ENCODE measurements at regions of chrX and their contacts with region 1.

Region 1: DNA sequence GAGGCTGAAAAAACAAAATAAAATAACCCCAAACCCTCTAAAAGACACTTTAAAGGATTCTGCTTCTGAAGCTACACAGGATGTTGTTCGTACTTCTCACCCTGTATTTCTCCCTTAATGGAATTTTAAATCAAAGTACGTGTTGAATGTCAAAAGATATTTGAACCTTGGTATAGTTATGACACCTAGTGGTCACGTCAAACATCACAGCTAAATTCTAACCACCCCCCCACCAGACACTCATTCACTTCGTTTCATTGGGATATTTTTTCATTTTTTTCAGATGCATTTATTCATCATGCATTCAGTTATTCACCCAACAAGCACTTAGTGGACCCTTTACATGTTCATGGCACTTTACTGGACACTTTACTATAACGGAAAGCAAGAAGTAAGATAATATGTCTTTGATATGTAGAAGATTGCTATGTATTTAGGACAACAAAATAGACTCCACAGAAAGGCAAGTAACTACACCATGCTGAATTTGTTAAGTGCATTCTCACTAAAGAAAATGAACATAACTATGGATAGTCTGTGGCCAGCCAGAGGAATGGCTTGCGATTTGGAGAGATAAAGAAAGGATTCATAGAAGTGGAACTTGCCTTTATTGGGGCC is 62.5 kb upstream of the GPR174 start:
- DNase-seq: peak; percentile 36
- H3K4me3 ChIP-seq: no peak overlapping the region
- H3K27ac ChIP-seq: no peak overlapping the region
- H3K4me1 ChIP-seq: no peaks in the 10 kb centered on the region
- H3K27me3 ChIP-seq: no peaks in the 10 kb centered on the region
- CTCF ChIP-seq: peak in 1 of 2 donors; percentile 31
- POLR2A ChIP-seq: no peak

Region 2: DNA sequence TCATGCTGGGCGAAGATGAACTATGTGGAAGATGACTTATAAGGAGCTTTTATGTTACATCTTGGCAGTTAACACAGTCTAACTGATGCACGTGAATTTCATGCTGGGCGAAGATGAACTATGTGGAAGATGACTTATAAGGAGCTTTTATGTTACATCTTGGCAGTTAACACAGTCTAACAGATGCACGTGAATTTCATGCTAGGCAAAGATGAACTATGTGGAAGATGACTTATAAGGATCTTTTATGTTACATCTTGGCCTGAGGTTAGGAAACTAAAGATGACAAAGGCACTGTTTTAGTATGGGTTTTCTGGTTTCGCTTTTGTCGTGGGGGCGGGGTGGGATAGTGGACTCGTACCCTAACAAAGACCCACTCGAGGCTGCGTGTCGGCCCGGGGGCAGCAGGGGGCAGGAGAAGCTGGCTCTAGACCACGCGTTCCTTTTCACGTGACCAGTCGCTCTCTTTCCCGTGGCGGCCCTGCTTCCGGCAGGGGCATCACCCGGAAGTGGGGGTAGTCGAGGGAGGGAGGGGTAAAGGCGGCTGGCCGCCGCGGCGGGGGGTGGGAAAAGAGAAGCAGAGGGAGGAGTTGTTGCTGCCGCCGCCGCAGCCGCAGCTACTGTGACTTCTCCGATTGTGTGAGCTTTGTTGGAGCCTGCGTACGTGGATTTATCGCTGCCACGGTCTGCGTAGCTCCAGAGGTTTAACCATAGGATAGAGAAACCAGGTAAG is 1171.7 kb before region 1 on chrX and contains the start of gene ATP7A:
- CTCF ChIA-PET with region 1: no interaction called
- POLR2A ChIA-PET with region 1: interaction called, 3 read pairs
- dilution Hi-C with region 1: no loop called
- intact Hi-C with region 1: loop called (anchors 5 kb)
- DNase-seq: peak; percentile 87
- H3K4me3 ChIP-seq: peak within 1 kb of the TSS; percentile 49 to 98 (median 80)
- H3K27ac ChIP-seq: peak within 1 kb of the TSS; percentile 78
- H3K4me1 ChIP-seq: peaks cover 6% of the 10 kb centered on the region
- H3K27me3 ChIP-seq: no peaks in the 10 kb centered on the region
- CTCF ChIP-seq: peak; percentile 49 to 69
- POLR2A ChIP-seq: no peak
- total RNA-seq, gene ATP7A: 8.7 and 8.8 TPM in 2 replicates

Region 3: DNA sequence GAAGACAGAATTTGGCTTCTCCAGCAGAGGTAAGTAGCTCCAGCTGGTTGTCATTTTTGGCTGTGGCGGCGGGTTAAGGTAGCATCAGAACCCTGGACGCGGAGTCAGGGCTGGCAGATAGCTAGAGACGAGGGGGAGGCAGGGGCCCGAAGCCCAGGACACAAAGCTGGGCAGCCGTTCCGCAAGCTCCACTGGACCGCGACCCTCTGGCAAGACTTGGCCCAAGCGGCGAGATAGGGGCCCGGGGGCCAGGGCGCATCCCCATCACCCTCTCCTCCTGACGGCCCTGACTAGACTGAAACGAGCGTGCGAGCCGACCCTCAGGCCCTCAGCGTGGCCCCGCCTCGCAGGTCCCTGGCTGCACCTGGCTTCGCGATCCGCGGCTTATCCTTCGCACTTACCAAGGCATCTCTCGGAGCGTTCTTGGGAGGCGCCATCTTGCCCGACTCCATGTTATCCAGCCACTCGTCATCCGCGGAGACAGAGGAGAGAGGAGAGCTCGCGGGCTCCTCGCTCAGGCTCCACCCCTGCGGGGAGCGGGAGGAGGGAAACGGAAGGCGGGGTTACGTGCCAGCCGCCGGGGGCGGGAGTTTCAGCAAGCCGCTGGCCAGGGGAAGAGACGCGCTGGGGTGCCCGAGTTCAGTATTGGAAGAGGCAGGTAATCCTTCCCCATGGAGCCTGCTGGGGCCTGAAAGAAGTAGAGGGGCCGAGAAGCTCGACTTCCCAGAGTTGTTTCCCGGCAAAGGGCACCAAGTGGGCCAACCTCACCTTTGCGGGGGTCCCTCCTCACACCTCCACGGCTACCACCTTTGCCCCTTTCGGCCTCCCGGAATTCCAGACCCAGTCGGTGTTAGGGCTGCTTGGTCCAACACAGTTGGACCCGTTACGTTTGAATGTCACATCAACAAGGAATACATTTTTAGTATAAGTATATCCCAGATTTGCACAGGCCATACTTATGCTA is 942.6 kb before region 1 on chrX and contains the start of gene TAF9B:
- CTCF ChIA-PET with region 1: interaction called, 4 read pairs
- POLR2A ChIA-PET with region 1: no interaction called
- dilution Hi-C with region 1: no loop called
- intact Hi-C with region 1: loop called (anchors 10 kb)
- DNase-seq: peak; percentile 80
- H3K4me3 ChIP-seq: peak within 1 kb of the TSS; percentile 55 to 74 (median 57)
- H3K27ac ChIP-seq: peak within 1 kb of the TSS; percentile 64
- H3K4me1 ChIP-seq: no peaks in the 10 kb centered on the region
- H3K27me3 ChIP-seq: no peaks in the 10 kb centered on the region
- CTCF ChIP-seq: no peak
- POLR2A ChIP-seq: peak; percentile 55
- total RNA-seq, gene TAF9B: 16.0 and 18.5 TPM in 2 replicates

Region 4: GRCh38 chrX:78555401-78555980 is 526.5 kb before region 1 on chrX:
- CTCF ChIA-PET with region 1: interaction called, 17 read pairs
- POLR2A ChIA-PET with region 1: no interaction called
- dilution Hi-C with region 1: no loop called
- intact Hi-C with region 1: loop called (anchors 1 kb)
- DNase-seq: peak; percentile 1
- H3K4me3 ChIP-seq: no peak overlapping the region
- H3K27ac ChIP-seq: no peak overlapping the region
- H3K4me1 ChIP-seq: no peaks in the 10 kb centered on the region
- H3K27me3 ChIP-seq: no peaks in the 10 kb centered on the region
- CTCF ChIP-seq: no peak
- POLR2A ChIP-seq: no peak

Region 5: DNA sequence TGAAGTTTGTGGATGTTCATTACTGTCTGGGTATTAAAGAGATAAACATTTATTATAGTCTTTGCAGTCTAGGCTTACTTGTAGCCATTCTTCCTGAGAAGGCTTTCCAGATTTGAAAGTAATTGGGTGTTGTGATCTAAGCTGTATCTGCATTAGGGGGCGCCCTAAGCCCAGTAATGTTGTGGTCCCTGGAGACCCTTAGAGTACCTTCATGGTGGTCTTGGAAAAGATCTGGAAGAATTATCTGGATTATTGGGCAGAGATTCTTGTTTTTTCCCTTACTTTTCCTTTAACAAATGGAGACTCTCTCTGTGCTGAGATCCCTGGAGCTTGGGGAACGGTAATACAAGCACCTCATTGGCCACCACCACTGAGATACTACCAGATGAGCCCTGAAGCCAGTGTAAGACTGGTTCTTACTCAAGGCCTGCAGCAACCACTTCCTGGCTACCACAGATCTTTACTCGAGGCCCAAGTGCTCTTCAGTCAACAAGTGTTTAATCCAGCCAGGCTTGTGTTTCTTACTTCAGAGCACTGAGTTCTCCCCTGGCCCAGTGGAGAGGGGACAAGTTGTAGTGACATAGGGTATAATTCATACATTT is 486.0 kb before region 1 on chrX:
- CTCF ChIA-PET with region 1: interaction called, 20 read pairs
- POLR2A ChIA-PET with region 1: no interaction called
- dilution Hi-C with region 1: no loop called
- intact Hi-C with region 1: loop called (anchors 1 kb)
- DNase-seq: peak; percentile 1
- H3K4me3 ChIP-seq: no peak overlapping the region
- H3K27ac ChIP-seq: no peak overlapping the region
- H3K4me1 ChIP-seq: no peaks in the 10 kb centered on the region
- H3K27me3 ChIP-seq: no peaks in the 10 kb centered on the region
- CTCF ChIP-seq: peak in 1 of 2 donors; percentile 18
- POLR2A ChIP-seq: no peak

Region 6: GRCh38 chrX:79270401-79270800 is 188.4 kb after region 1 on chrX:
- CTCF ChIA-PET with region 1: no interaction called
- POLR2A ChIA-PET with region 1: no interaction called
- dilution Hi-C with region 1: no loop called
- intact Hi-C with region 1: loop called (anchors 2 kb)
- DNase-seq: peak; percentile 2
- H3K4me3 ChIP-seq: no peak overlapping the region
- H3K27ac ChIP-seq: no peak overlapping the region
- H3K4me1 ChIP-seq: no peaks in the 10 kb centered on the region
- H3K27me3 ChIP-seq: no peaks in the 10 kb centered on the region
- CTCF ChIP-seq: peak; percentile 6 to 15
- POLR2A ChIP-seq: no peak

Region 7: GRCh38 chrX:79412972-79413371 is 331.0 kb after region 1 on chrX:
- CTCF ChIA-PET with region 1: interaction called, 11 read pairs
- POLR2A ChIA-PET with region 1: no interaction called
- dilution Hi-C with region 1: no loop called
- intact Hi-C with region 1: loop called (anchors 2 kb)
- DNase-seq: peak; percentile 1
- H3K4me3 ChIP-seq: no peak overlapping the region
- H3K27ac ChIP-seq: no peak overlapping the region
- H3K4me1 ChIP-seq: no peaks in the 10 kb centered on the region
- H3K27me3 ChIP-seq: no peaks in the 10 kb centered on the region
- CTCF ChIP-seq: peak in 1 of 2 donors; percentile 6
- POLR2A ChIP-seq: no peak

Measured in endothelial cell of umbilical vein (primary cell).